ENCODE measurements at regions of chr2 and their contacts with region 1.

Region 1: DNA sequence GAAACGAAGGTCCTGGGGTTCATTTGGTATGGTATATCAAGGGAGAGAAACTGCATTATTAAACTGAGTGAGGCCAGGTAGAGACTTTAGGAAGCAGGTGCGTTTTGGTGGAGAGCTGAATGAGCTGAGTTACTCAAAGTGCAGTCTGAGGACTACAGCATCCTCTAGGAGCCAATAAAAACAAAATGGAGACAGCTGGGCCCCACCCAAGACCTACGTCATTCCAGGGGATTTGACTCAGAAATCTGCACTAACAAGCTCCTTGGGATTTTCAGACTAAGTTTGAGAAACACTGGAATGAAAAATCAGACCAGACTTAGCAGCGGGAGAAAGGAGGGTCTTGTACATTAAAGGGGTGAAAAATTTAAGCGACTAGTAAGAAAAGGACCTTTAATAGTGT is 131.5 kb downstream of the UXS1 start:
- DNase-seq: no peak
- ATAC-seq: no peak
- H3K4me3 Mint-ChIP-seq: no peak overlapping the region
- H3K27ac Mint-ChIP-seq: no peak overlapping the region
- H3K4me1 Mint-ChIP-seq: peaks cover 27% of the 10 kb centered on the region
- H3K27me3 Mint-ChIP-seq: peaks cover 25% of the 10 kb centered on the region

Region 2: GRCh38 chr2:105943977-105944376 is 118.7 kb before region 1 on chr2:
- CTCF ChIA-PET with region 1: no interaction called
- DNase-seq: no peak
- ATAC-seq: no peak
- H3K4me3 Mint-ChIP-seq: no peak overlapping the region
- H3K27ac Mint-ChIP-seq: no peak overlapping the region
- H3K4me1 Mint-ChIP-seq: peaks cover 2% of the 10 kb centered on the region
- H3K27me3 Mint-ChIP-seq: no peaks in the 10 kb centered on the region

Region 3: DNA sequence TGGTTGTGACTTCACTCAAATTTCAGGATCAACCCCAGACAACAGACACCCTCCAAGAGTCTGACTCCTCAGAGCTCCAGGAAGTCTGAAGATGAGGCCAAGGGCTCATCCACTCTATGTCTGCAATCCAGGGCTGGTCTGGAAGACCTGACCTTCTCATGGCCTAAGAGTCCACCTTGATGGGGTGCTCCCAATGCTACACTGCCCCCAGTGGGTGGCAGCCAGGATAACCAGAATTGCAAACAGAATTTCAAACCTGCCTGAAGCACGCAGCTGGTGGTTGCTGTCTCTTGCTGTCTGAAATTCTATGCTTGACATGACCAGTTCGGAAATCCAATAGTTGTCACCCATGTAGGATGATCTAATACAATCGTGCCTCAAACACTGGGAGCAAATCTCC is 35.5 kb after region 1 on chr2:
- CTCF ChIA-PET with region 1: interaction called, 13 read pairs
- DNase-seq: no peak
- ATAC-seq: no peak
- H3K4me3 Mint-ChIP-seq: no peak overlapping the region
- H3K27ac Mint-ChIP-seq: no peak overlapping the region
- H3K4me1 Mint-ChIP-seq: peaks cover 50% of the 10 kb centered on the region
- H3K27me3 Mint-ChIP-seq: no peaks in the 10 kb centered on the region

Measured in activated CD8-positive, alpha-beta memory T cell treated with anti-CD3 and anti-CD28 coated beads, Interleukin-2, amount 10 ng/mL, durations not matched to agents 7 days and 5 days (primary cell).